Mammary epithelial cell (primary cell): ENCODE measurements at regions of chr20 and their contacts with region 1.

Region 1: GRCh38 chr20:45044084-45044573 is 56.8 kb downstream of the KCNS1 start:
- DNase-seq: peak; percentile 61
- H3K4me3 ChIP-seq: no peak overlapping the region
- H3K27ac ChIP-seq: peak overlapping the region; percentile 17
- H3K4me1 ChIP-seq: peaks cover 23% of the 10 kb centered on the region
- H3K27me3 ChIP-seq: no peaks in the 10 kb centered on the region
- CTCF ChIP-seq: peak; percentile 94 to 95

Region 2: GRCh38 chr20:44210422-44211176 is 833.5 kb before region 1 on chr20 and contains the start of gene OSER1:
- CTCF ChIA-PET with region 1: no interaction called
- dilution Hi-C with region 1: no loop called
- in situ Hi-C with region 1: no loop called
- intact Hi-C with region 1: no loop called
- DNase-seq: peak; percentile 98
- H3K4me3 ChIP-seq: peak within 1 kb of the TSS; percentile 76 to 99 (median 97)
- H3K27ac ChIP-seq: peak within 1 kb of the TSS; percentile 97
- H3K4me1 ChIP-seq: peaks cover 39% of the 10 kb centered on the region
- H3K27me3 ChIP-seq: no peaks in the 10 kb centered on the region
- CTCF ChIP-seq: no peak
- total RNA-seq, gene OSER1: 18.5 to 29.5 TPM

Region 3: DNA sequence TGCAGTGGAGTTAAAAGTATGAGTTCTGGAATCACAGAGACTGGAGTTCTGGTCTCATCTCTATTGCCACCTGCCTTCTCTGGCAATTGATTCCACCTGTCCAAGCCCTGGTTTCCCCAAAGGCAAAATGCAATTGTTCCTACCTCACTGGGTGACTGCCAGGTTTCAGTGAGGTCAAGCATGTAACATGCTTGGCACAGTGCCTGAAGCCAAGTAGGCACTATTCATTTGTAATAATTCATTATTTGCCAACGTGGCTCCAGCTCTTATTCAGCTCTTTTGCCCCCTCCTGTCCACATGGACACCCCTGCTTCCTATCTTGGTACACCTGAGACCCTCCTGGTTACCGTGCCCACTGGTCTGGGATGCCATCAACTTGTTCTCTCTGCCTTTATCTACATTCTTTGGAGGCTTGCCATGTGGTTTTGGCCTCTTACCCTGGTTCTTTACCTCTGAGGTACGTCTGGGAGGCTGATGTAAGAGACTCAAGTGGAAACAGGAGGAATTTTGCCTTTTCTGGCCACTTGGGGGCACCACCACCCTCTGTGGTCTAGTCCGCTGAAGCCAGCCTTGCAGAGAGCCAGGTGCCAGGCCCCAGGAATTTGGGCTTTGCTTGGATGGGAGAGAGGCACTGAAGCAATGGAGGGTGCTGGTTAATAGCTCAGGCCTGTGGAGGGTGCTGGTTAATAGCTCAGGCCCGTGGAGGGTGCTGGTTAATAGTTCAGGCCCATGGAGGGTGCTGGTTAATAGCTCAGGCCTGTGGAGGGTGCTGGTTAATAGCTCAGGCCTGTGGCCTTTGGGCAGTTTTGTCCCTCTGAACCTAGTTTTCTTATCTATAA is 296.7 kb before region 1 on chr20:
- CTCF ChIA-PET with region 1: no interaction called
- dilution Hi-C with region 1: no loop called
- in situ Hi-C with region 1: no loop called
- intact Hi-C with region 1: no loop called
- DNase-seq: peak; percentile 87
- H3K4me3 ChIP-seq: no peak overlapping the region
- H3K27ac ChIP-seq: no peak overlapping the region
- H3K4me1 ChIP-seq: peaks cover 18% of the 10 kb centered on the region
- H3K27me3 ChIP-seq: peaks cover 7% of the 10 kb centered on the region
- CTCF ChIP-seq: peak; percentile 77 to 79

Region 4: DNA sequence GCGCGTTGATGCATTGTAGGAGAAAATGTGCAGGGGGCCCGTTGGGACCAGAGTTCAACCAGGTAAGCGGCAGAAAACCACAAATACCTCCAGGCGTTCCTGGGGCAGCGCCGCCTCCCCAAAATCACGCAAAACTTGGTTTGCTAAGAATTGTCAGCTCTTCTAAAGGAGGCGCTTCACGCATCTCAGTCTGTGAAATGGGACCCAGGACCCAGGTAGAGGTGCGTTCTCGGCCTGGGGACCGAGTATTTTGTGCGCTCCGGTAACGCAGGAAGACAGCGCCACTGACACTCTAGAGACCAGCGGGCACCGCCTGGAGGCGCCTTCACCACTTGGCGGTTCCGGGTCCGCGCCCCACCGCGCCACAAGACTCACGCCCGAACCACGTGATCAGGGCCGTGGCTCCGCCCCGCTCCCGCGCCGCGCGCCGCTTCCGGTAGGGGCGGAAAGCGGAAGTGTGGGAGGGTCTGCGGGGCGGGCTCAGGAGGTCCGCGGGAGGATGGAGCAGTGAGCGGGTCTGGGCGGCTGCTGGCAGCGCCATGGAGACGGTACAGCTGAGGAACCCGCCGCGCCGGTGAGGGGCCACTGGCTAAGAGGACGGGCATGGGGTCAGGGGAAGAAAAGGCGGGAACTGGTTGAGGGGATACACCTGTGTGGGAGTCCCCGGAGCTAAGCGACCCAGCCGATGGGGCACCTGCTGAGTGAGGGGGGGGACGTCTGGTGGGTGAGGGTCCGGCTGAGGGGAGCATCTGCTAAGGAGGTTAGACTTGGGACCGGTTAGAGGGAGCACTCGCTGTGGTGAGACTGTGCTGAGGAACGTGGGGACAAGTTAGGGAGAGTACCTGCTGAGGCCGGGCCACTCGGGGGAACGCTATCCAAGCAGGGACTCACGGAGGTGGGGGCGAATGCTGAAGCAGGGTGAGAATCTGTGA is 77.8 kb before region 1 on chr20 and contains the start of gene STK4:
- CTCF ChIA-PET with region 1: no interaction called
- dilution Hi-C with region 1: no loop called
- in situ Hi-C with region 1: no loop called
- intact Hi-C with region 1: loop called (anchors 5 kb)
- DNase-seq: peak; percentile 92
- H3K4me3 ChIP-seq: peak within 1 kb of the TSS; percentile 80 to 92 (median 90)
- H3K27ac ChIP-seq: peak within 1 kb of the TSS; percentile 66
- H3K4me1 ChIP-seq: peaks cover 18% of the 10 kb centered on the region
- H3K27me3 ChIP-seq: no peaks in the 10 kb centered on the region
- CTCF ChIP-seq: peak; percentile 15 to 58
- total RNA-seq, gene STK4: 30.7 to 42.7 TPM

Region 5: DNA sequence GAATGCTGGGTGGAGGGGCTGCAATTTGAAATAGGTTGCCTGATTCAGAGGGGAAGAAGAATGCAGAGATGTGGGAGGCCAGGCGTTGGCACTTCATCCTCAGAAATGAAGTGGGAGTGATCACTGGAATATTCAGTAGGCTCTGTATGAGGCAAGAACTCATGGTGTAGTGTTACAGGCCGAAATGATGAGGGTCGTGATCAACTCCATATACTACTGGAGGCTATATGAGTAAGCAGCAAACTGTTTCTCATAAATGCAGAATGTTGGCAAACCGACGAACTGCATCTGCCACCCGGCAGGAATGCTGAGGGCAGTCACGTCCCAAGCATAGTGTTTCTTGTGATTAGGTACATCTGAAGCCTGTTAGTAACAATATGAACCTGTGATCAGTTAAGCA is 44.1 kb after region 1 on chr20:
- CTCF ChIA-PET with region 1: no interaction called
- dilution Hi-C with region 1: no loop called
- in situ Hi-C with region 1: loop called (anchors 5 kb)
- intact Hi-C with region 1: no loop called
- DNase-seq: peak; percentile 96
- H3K4me3 ChIP-seq: no peak overlapping the region
- H3K27ac ChIP-seq: peak overlapping the region; percentile 64
- H3K4me1 ChIP-seq: peaks cover 22% of the 10 kb centered on the region
- H3K27me3 ChIP-seq: no peaks in the 10 kb centered on the region
- CTCF ChIP-seq: no peak

Region 6: GRCh38 chr20:45138561-45139300 is 94.6 kb after region 1 on chr20:
- CTCF ChIA-PET with region 1: interaction called, 3 read pairs
- dilution Hi-C with region 1: no loop called
- in situ Hi-C with region 1: no loop called
- intact Hi-C with region 1: loop called (anchors 5 kb)
- DNase-seq: peak; percentile 56
- H3K4me3 ChIP-seq: no peak overlapping the region
- H3K27ac ChIP-seq: no peak overlapping the region
- H3K4me1 ChIP-seq: peaks cover 3% of the 10 kb centered on the region
- H3K27me3 ChIP-seq: no peaks in the 10 kb centered on the region
- CTCF ChIP-seq: peak; percentile 88 to 91

Region 7: GRCh38 chr20:45293041-45294002 is 249.2 kb after region 1 on chr20:
- CTCF ChIA-PET with region 1: interaction called, 9 read pairs
- dilution Hi-C with region 1: no loop called
- in situ Hi-C with region 1: no loop called
- intact Hi-C with region 1: loop called (anchors 1 kb)
- DNase-seq: peak; percentile 60
- H3K4me3 ChIP-seq: peak overlapping the region; percentile 50 to 57 (median 50)
- H3K27ac ChIP-seq: no peak overlapping the region
- H3K4me1 ChIP-seq: peaks cover 6% of the 10 kb centered on the region
- H3K27me3 ChIP-seq: no peaks in the 10 kb centered on the region
- CTCF ChIP-seq: peak; percentile 89 to 96